ENCODE measurements at regions of chr13 and their contacts with region 1.

Region 1: DNA sequence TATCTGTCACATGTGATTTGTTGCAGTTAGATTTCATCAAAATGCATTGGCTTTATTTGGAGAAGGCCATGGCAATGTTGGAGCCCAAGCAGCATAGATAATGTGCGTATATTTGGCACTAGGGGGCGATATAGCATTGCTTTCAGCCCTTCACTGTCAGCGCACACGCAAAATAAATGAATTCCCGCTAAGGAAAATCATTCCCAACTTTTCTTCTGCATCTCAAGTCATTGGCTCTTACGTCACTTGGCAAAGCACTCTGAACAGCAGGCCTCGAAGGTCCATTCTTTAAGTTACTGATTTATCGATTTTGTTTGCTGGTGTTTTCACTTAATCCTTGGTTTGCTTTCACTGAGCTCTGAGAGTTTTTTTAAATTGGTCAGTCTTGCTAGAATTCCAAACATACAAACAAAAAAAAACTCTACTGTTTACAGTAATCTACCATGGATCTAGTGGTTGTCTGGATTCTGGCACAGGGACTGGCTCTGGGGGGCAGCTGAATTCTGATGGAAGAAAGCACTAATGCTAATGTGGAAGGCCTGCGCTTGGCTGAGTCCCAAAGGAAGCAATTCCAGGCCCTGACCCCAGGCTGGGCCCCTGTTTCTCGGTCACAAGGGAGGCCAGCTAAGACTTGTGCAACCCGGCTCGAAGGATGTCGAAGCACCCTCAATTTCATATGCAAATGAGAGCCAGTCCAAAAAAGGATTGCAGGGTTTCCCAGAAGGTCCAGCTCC is 97.7 kb upstream of the IPO5 start:
- DNase-seq: peak; percentile 14 to 46
- H3K4me3 ChIP-seq: no peak overlapping the region
- H3K27ac ChIP-seq: no peak overlapping the region
- H3K4me1 ChIP-seq: no peaks in the 10 kb centered on the region
- H3K27me3 ChIP-seq: no peaks in the 10 kb centered on the region
- CTCF ChIP-seq: peak; percentile 52 to 89 (median 74)
- POLR2A ChIP-seq: no peak

Region 2: DNA sequence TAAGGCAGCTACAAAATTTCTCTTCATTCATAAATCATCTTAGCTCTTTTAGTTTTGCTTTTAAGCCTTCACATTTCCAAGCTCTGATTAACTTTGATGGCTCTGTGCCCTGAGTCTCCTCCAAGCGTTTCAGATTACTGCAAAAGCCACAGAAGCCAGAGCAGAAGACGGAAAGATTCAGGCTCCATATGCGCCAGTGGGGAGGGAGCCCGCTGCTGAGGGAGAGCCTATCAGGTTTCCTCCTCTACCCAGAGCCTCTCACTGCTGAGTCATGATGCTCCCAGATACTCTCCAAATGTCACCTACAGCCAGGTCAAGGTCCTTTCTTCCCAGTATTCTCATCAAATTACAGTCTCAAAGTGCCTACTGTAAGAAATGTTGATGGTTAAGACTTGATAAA is 228.2 kb before region 1 on chr13:
- intact Hi-C with region 1: no loop called
- DNase-seq: peak; percentile 49 to 76
- H3K4me3 ChIP-seq: no peak overlapping the region
- H3K27ac ChIP-seq: no peak overlapping the region
- H3K4me1 ChIP-seq: peaks cover 0 to 4% of the 10 kb centered on the region in 2 donors
- H3K27me3 ChIP-seq: no peaks in the 10 kb centered on the region
- CTCF ChIP-seq: no peak
- POLR2A ChIP-seq: no peak

Region 3: GRCh38 chr13:98133946-98134345 is 278.2 kb after region 1 on chr13:
- intact Hi-C with region 1: loop called (anchors 10 kb)
- DNase-seq: no peak
- H3K4me3 ChIP-seq: no peak overlapping the region
- H3K27ac ChIP-seq: no peak overlapping the region
- H3K4me1 ChIP-seq: no peaks in the 10 kb centered on the region
- H3K27me3 ChIP-seq: no peaks in the 10 kb centered on the region
- CTCF ChIP-seq: no peak
- POLR2A ChIP-seq: no peak

Region 4: DNA sequence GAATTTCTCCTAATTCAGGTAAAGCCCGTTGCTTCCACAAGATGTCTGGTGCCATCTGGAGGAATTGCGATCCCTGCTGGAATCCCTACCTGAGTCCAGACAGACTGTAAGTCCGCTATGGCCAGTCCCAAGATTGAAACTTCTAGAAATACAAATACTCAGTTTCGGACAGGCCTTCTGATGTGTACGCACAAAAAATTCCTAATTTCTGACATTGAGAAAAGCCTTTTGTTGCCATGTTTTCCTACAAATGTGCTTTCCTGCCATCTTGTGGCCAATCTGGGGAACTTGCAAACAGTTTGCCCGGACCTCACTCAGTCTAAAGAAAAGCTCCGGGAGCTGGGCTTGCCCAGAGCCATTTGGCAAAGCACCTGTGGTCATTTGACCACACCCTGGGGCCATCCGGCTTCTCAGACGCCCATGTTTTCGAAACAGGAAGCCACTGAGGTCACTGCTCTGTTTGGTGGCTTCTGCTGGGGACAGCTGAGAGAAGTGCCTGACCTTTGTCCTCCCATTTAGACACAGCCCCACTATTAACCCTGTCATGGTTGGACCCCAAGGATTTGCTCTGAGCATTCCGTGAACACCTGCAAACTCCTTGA is 817.3 kb after region 1 on chr13:
- intact Hi-C with region 1: loop called (anchors 10 kb)
- DNase-seq: peak; percentile 70 to 72
- H3K4me3 ChIP-seq: no peak overlapping the region
- H3K27ac ChIP-seq: no peak overlapping the region
- H3K4me1 ChIP-seq: peaks cover 0 to 6% of the 10 kb centered on the region in 2 donors
- H3K27me3 ChIP-seq: no peaks in the 10 kb centered on the region
- CTCF ChIP-seq: peak; percentile 76 to 94 (median 82)
- POLR2A ChIP-seq: no peak

Measured in thyroid gland (tissue), 4 donors.